ENCODE measurements at regions of chr5 and their contacts with region 1.

Region 1: DNA sequence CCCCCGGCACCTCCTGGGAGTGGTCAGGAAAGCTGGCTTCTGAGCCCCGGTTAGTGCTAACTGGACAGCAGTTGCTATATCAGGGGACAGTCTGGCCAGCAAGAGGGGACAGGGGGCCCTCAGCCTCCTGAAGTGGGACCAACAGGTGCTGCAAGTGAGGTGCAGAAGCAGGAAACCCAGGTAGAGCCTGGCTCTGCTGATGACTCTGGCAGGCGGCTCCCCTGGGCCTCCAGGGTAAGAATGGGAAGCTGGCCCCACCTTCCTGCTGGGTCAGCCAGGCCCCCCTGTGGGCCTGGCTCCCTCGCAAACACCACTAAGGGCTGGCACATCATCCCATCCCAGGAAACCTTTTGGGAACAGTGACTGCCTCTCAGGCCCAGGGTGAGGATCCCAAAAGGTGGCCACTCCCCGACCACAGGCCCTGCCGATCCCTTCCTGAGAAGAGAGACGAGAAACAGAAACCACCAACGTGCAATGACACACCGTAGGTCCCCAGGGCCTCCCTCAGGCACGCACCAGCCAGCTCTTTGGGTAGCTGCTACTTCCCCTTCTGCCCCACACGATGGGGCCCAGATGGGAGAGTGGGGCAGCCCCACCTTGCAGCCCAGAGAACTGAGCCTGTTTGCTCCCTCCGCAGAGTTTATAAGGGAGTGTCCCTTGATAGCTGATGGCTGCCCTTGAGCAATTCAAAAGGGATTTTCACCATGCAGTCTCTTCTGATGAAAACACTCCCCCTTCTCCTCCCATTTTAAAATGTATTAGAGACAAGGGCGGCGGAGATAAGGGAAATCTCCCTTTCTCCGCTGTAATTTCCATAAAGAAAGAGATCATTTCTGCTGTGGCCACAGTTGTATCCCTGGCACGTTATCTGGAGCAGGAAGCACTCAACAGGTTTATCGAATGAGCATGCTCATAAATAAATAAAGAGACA is 76.8 kb downstream of the STK10 start:
- DNase-seq: peak; percentile 98

Region 2: GRCh38 chr5:172188033-172188892 is 77.1 kb after region 1 on chr5 and contains the start of gene STK10:
- in situ Hi-C with region 1: loop called (anchors 10 kb)
- DNase-seq: peak; percentile 95